PC-3 (cell line): ENCODE measurements at regions of chrX and their contacts with region 1.

Region 1: DNA sequence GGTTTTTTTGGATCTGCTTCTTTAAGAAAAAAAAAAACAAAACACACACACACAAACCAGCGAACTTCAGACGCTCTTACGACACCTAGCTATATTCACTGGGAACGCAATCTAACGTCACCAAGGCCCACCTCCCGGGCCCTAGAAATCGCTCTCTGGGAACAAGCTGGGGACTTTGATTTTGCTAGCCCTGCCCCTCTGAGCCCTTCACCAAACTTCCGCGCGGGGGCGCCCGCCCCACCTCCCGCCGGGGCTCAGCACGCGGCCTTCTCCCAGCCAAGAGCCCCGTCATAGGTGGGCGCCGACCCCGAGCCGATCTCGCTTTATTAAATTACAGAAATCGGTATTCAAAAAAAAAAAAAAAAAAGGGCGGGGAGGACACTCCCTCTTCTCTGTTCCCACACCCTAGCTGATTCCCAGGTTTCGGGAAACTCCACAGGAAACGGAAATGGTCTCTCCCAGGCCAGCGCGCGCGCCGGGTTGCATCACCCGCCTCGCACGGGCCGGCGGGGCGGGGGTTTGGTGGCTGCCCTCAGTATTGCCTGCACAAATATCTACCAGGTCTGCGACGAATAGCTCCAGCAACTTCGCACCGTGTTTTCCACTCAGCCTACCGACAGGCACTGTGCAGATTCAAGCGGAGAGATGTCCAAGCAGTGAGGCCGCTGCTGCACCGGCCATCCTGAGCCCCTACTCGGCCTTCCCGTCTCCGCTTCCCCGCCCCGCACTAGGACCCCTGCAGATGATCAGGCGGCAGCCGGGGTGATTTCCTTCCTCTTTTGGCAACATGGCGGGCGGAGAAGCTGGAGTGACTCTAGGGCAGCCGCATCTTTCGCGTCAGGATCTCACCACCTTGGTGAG is at the start of gene EIF2S3:
- DNase-seq: peak; percentile 91
- ATAC-seq: peak; percentile 90
- H3K4me3 ChIP-seq: no peak within 1 kb of the TSS
- H3K27ac ChIP-seq: peak within 1 kb of the TSS; percentile 94
- H3K4me1 ChIP-seq: peaks cover 14% of the 10 kb centered on the region
- H3K27me3 ChIP-seq: no peaks in the 10 kb centered on the region
- CTCF ChIP-seq: peak; percentile 70
- total RNA-seq, gene EIF2S3: 178 and 201 TPM in 2 replicates

Region 2: GRCh38 chrX:22950269-22951266 is 1103.8 kb before region 1 on chrX:
- CTCF ChIA-PET with region 1: no interaction called
- POLR2A ChIA-PET with region 1: no interaction called
- intact Hi-C with region 1: no loop called
- DNase-seq: peak; percentile 88
- ATAC-seq: peak; percentile 94
- H3K4me3 ChIP-seq: no peak overlapping the region
- H3K27ac ChIP-seq: no peak overlapping the region
- H3K4me1 ChIP-seq: peaks cover 20% of the 10 kb centered on the region
- H3K27me3 ChIP-seq: no peaks in the 10 kb centered on the region
- CTCF ChIP-seq: no peak

Region 3: GRCh38 chrX:23694606-23695005 is 359.8 kb before region 1 on chrX:
- CTCF ChIA-PET with region 1: no interaction called
- POLR2A ChIA-PET with region 1: no interaction called
- intact Hi-C with region 1: loop called (anchors 10 kb)
- DNase-seq: peak; percentile 72
- ATAC-seq: peak; percentile 74
- H3K4me3 ChIP-seq: no peak overlapping the region
- H3K27ac ChIP-seq: no peak overlapping the region
- H3K4me1 ChIP-seq: no peaks in the 10 kb centered on the region
- H3K27me3 ChIP-seq: no peaks in the 10 kb centered on the region
- CTCF ChIP-seq: peak; percentile 42; the same call in 1 of the 2 replicates

Region 4: DNA sequence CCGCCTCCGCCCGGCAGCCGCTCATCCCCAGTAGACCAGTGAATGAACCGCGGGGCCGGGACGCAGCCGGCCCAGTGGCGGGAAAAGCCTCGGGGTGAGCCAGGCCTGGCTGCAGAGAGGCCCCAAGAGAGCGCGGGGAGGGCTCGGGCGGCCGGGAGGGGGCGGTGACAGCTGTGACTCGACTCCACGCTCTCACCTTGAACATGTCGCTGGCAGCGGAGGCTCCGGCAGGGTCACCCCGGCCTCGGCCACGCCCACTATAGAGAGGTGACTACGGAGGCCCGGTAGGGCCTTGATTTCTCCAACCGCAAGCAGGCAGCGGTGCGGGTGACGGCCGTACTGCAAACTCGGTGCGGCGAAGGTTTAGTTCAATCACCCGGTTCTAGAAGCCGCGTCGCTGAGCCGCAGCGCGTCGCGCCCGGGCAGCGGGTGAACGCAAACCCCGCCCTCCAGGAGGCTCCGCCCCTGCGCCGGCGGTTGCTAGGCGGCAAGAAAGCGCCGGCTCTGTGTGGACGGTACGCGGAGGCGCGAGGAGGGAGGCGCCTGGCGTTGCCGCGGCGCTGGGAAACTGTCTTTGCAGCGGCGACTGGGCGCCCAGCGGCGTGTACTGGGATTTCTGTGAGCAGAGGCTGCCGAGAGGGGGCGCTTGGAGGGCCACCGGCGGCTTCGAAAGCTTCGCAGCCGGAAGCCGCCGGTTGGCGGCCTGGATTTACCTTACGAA is 146.8 kb before region 1 on chrX and contains the starts of genes APOO and CXorf58:
- CTCF ChIA-PET with region 1: interaction called, 4 read pairs
- POLR2A ChIA-PET with region 1: no interaction called
- intact Hi-C with region 1: loop called (anchors 1 kb)
- DNase-seq: peak; percentile 93
- ATAC-seq: peak; percentile 95
- H3K4me3 ChIP-seq: peak within 1 kb of the TSS; percentile 95
- H3K27ac ChIP-seq: peak within 1 kb of the TSS; percentile 79
- H3K4me1 ChIP-seq: peaks cover 12% of the 10 kb centered on the region
- H3K27me3 ChIP-seq: no peaks in the 10 kb centered on the region
- CTCF ChIP-seq: peak; percentile 69
- total RNA-seq, gene APOO: 30.4 and 34.0 TPM in 2 replicates
- total RNA-seq, gene CXorf58: not detected in 2 replicates

Region 5: DNA sequence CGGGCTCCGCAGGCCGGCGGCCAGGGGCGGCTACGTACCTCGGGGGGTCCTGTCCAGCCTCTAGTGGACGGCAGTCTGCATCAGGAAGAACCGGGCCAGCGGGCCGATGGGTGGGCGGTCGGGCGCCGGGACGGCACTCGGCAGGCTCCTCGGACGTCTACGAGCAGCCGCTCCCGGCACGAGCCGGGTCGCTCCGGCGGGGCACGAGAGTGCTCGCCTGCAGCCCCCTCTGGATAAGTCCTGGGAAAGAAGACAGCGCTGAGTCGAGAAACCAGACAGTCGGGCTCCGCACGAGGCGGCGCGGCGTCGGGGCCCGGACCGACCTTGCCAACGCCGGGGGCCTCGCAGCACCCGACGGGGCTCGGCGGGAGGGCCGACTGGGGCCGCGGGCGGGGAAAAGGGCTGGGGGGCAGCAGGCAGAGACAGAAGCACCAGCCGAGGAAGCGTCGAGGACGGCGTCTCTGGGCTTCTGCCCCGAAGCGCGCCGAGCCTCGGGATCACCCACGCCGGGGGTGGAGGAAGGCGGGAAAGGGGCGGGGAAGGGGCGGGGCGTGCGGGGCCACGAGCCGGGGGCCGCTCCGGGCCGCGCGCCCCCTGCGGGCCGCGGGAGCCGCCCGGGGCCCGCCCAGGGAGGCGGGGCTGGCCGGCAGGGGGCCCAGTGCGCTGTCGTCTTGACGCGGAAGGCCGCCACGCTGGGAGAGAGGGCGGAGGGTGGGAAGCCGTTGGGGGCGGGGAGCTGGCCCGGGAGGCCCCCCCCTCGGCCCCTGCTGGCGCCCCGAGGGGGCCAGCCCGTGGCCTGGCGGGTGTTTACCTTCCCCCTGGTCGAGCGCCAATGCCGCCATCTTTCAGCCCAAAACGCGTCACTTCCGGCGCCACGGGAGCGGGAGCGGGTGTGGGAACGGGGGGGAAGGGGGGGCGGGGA is 29.3 kb before region 1 on chrX:
- CTCF ChIA-PET with region 1: interaction called, 18 read pairs
- POLR2A ChIA-PET with region 1: interaction called, 7 read pairs
- intact Hi-C with region 1: loop called (anchors 1 kb)
- DNase-seq: peak; percentile 86
- ATAC-seq: peak; percentile 83
- H3K4me3 ChIP-seq: peak overlapping the region; percentile 97
- H3K27ac ChIP-seq: peak overlapping the region; percentile 78
- H3K4me1 ChIP-seq: peaks cover 12% of the 10 kb centered on the region; the same call in 1 of the 2 replicates
- H3K27me3 ChIP-seq: no peaks in the 10 kb centered on the region
- CTCF ChIP-seq: no peak

Region 6: GRCh38 chrX:24117258-24117657 is 62.8 kb after region 1 on chrX:
- CTCF ChIA-PET with region 1: no interaction called
- POLR2A ChIA-PET with region 1: no interaction called
- intact Hi-C with region 1: no loop called
- DNase-seq: peak; percentile 62
- ATAC-seq: peak; percentile 86
- H3K4me3 ChIP-seq: peak overlapping the region; percentile 19; the same call in 1 of the 2 replicates
- H3K27ac ChIP-seq: no peak overlapping the region
- H3K4me1 ChIP-seq: peaks cover 17% of the 10 kb centered on the region; the same call in 1 of the 2 replicates
- H3K27me3 ChIP-seq: no peaks in the 10 kb centered on the region
- CTCF ChIP-seq: no peak

Region 7: DNA sequence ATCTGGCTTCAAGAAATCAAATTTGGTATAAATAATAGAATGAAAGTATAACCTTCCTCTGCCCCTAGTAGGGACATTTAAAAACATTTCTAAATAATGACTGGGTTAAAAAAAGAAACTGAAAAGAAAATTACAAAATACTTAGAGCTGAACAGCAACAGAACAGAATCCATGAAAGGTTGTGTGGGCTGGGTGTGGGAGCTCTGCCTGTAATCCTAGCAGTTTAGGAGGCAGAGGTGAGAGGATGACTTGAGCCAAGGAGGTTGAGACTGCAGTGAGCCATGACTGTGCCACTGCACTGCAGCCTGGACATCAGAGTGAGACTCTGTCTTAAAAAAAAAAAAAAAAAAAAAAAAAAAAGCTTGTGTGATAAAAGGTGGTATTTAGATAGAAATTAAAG is 82.8 kb after region 1 on chrX:
- CTCF ChIA-PET with region 1: no interaction called
- POLR2A ChIA-PET with region 1: interaction called, 21 read pairs
- intact Hi-C with region 1: no loop called
- DNase-seq: no peak
- ATAC-seq: no peak
- H3K4me3 ChIP-seq: no peak overlapping the region
- H3K27ac ChIP-seq: no peak overlapping the region
- H3K4me1 ChIP-seq: peaks cover 5% of the 10 kb centered on the region; the same call in 1 of the 2 replicates
- H3K27me3 ChIP-seq: no peaks in the 10 kb centered on the region
- CTCF ChIP-seq: no peak

Region 8: DNA sequence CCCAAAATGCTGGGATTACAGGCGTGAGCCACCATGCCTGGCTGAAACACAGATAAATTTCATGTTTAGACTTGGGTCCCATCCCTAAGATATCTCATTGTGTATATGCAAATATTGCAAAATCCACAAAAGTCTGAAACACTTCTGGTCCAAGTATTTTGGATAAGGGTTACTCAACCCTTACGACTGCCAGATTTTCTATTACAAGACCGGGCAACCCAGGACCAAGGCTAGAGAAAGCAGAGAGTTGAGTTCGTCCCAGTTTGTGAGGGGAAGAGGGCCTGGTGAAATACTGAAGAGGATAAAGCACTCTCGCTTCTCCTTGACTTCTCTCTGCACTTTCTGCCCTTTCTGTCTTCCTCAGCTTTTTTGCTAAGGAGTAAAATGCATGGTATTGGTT is 129.6 kb after region 1 on chrX:
- CTCF ChIA-PET with region 1: no interaction called
- POLR2A ChIA-PET with region 1: no interaction called
- intact Hi-C with region 1: no loop called
- DNase-seq: no peak
- ATAC-seq: no peak
- H3K4me3 ChIP-seq: no peak overlapping the region
- H3K27ac ChIP-seq: no peak overlapping the region
- H3K4me1 ChIP-seq: no peaks in the 10 kb centered on the region
- H3K27me3 ChIP-seq: no peaks in the 10 kb centered on the region
- CTCF ChIP-seq: no peak